CD8-positive, alpha-beta T cell (primary cell): ENCODE measurements at regions of chr14 and their contacts with region 1.

Region 1: DNA sequence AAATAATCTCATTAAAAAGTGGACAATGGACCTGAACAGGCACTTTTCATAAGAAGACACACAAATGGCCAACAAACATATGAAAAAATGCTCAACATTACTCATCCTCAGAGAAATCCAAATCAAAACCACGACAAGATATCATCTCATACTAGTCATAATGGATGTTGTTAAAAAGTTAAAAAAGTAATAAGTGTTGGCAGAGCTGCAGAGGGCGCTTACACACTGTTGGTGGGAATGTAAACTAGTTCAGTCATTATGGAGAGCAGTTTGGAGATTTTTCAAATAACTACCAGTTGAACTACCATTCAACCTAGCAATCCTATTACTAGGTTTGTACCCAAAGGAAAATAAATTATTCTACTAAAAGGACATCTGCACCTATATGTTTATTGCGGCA is 47.2 kb downstream of the FOXG1 start:
- DNase-seq: no peak
- ATAC-seq: no peak
- H3K4me3 ChIP-seq: no peak overlapping the region
- H3K4me3 Mint-ChIP-seq: no peak overlapping the region
- H3K27ac ChIP-seq: no peak overlapping the region
- H3K27ac Mint-ChIP-seq: no peak overlapping the region
- H3K4me1 ChIP-seq: no peaks in the 10 kb centered on the region
- H3K4me1 Mint-ChIP-seq: no peaks in the 10 kb centered on the region
- H3K27me3 ChIP-seq: no peaks in the 10 kb centered on the region
- H3K27me3 Mint-ChIP-seq: no peaks in the 10 kb centered on the region
- CTCF ChIP-seq: no peak

Region 2: GRCh38 chr14:27384124-27384523 is 1429.7 kb before region 1 on chr14:
- CTCF ChIA-PET with region 1: no interaction called
- POLR2A ChIA-PET with region 1: no interaction called
- intact Hi-C with region 1: loop called in 1 of 2 experiments (anchors 5 kb)
- DNase-seq: no peak
- ATAC-seq: no peak
- H3K4me3 ChIP-seq: no peak overlapping the region
- H3K4me3 Mint-ChIP-seq: no peak overlapping the region
- H3K27ac ChIP-seq: no peak overlapping the region
- H3K27ac Mint-ChIP-seq: no peak overlapping the region
- H3K4me1 ChIP-seq: no peaks in the 10 kb centered on the region
- H3K4me1 Mint-ChIP-seq: no peaks in the 10 kb centered on the region
- H3K27me3 ChIP-seq: no peaks in the 10 kb centered on the region
- H3K27me3 Mint-ChIP-seq: no peaks in the 10 kb centered on the region
- CTCF ChIP-seq: no peak

Region 3: GRCh38 chr14:28681683-28682082 is 132.1 kb before region 1 on chr14:
- CTCF ChIA-PET with region 1: no interaction called
- POLR2A ChIA-PET with region 1: no interaction called
- intact Hi-C with region 1: no loop called
- DNase-seq: no peak
- ATAC-seq: no peak
- H3K4me3 ChIP-seq: no peak overlapping the region
- H3K4me3 Mint-ChIP-seq: no peak overlapping the region
- H3K27ac ChIP-seq: no peak overlapping the region
- H3K27ac Mint-ChIP-seq: no peak overlapping the region
- H3K4me1 ChIP-seq: no peaks in the 10 kb centered on the region
- H3K4me1 Mint-ChIP-seq: no peaks in the 10 kb centered on the region
- H3K27me3 ChIP-seq: no peaks in the 10 kb centered on the region
- H3K27me3 Mint-ChIP-seq: no peaks in the 10 kb centered on the region
- CTCF ChIP-seq: no peak

Region 4: DNA sequence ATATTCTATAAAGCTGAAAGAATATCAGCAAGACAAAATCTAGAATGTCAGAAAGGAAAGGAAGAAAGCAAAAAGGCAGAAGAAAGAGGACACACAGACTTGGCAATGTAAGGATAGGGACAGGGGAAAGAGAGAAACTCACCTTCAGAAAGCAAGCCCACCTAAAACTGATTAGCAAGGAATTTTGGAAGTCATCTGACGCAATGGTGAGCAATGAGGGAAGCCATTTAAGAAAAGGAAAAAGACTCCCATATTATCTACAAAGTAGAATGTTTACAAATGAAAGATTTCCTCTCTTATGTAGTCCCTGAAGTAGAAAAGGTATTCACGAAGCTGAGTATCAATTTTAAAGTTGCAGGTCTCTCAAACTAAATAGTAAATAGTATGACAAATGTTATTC is 82.5 kb before region 1 on chr14:
- CTCF ChIA-PET with region 1: no interaction called
- POLR2A ChIA-PET with region 1: no interaction called
- intact Hi-C with region 1: no loop called
- DNase-seq: no peak
- ATAC-seq: no peak
- H3K4me3 ChIP-seq: no peak overlapping the region
- H3K4me3 Mint-ChIP-seq: no peak overlapping the region
- H3K27ac ChIP-seq: no peak overlapping the region
- H3K27ac Mint-ChIP-seq: no peak overlapping the region
- H3K4me1 ChIP-seq: no peaks in the 10 kb centered on the region
- H3K4me1 Mint-ChIP-seq: no peaks in the 10 kb centered on the region
- H3K27me3 ChIP-seq: no peaks in the 10 kb centered on the region
- H3K27me3 Mint-ChIP-seq: no peaks in the 10 kb centered on the region
- CTCF ChIP-seq: no peak